ENCODE measurements at regions of chr10 and their contacts with region 1.

Region 1: GRCh38 chr10:63629363-63630084 is 108.3 kb downstream of the REEP3 start:
- DNase-seq: peak; percentile 89
- ATAC-seq: peak; percentile 56
- H3K4me3 ChIP-seq: peak overlapping the region; percentile 65 to 88 (median 81)
- H3K4me3 Mint-ChIP-seq: peak overlapping the region; percentile 97
- H3K27ac ChIP-seq: peak overlapping the region; percentile 61 to 66
- H3K27ac Mint-ChIP-seq: peak overlapping the region; percentile 96
- H3K4me1 ChIP-seq: peaks cover 17 to 28% of the 10 kb centered on the region in 2 donors
- H3K4me1 Mint-ChIP-seq: peaks cover 24% of the 10 kb centered on the region
- H3K27me3 ChIP-seq: no peaks in the 10 kb centered on the region
- H3K27me3 Mint-ChIP-seq: no peaks in the 10 kb centered on the region
- CTCF ChIP-seq: peak; percentile 90

Region 2: DNA sequence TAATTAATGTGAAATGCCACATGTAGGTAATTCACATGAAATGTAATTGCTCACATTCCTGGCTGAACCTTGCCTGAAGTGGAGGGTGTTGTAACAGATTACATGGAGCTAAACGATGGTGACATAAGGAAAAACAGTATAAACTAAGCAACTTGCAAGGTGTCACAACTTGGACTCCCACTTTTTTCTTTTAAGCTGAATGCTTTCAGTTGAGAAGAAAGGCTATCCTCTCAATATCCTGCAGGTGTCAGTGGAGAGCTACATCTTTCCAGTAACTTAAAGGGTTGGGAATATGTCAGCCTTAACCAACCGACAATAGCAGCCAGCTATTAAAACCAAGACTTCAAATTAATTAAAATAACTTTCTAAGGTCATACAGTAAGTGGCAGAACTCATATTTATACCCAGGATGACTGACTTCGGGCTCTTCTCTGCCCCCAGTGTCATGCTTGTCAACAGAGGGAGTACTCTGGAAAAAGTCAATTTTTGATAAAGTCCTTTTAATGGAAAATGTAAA is 462.7 kb before region 1 on chr10:
- CTCF ChIA-PET with region 1: interaction called, 129 read pairs
- POLR2A ChIA-PET with region 1: interaction called, 4 read pairs
- intact Hi-C with region 1: loop called (anchors 1 kb)
- DNase-seq: peak; percentile 74
- ATAC-seq: peak; percentile 84
- H3K4me3 ChIP-seq: no peak overlapping the region
- H3K4me3 Mint-ChIP-seq: no peak overlapping the region
- H3K27ac ChIP-seq: no peak overlapping the region
- H3K27ac Mint-ChIP-seq: no peak overlapping the region
- H3K4me1 ChIP-seq: no peaks in the 10 kb centered on the region
- H3K4me1 Mint-ChIP-seq: peaks cover 2% of the 10 kb centered on the region
- H3K27me3 ChIP-seq: no peaks in the 10 kb centered on the region
- H3K27me3 Mint-ChIP-seq: no peaks in the 10 kb centered on the region
- CTCF ChIP-seq: peak; percentile 83

Region 3: DNA sequence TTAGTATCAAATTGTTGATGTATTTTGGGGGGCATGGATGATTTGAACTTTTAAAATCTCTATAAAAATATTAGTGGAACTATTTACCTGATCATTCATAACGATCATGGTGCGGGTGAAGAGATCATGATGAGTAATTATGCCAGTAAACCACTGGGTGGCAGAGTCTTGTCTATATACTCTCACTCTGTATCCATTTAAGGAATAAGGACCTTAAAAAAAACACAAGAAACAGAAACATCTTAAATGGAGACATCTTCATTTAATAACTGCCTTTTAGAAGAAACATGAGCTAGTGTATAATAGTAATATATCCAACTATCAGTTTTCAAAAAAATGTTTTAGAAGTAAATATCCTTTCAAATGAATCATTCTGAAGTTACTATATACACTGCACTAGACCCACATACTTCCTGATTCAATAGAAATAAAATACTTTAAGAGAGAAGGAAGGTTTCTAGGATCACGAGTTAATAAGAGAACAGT is 412.4 kb before region 1 on chr10:
- CTCF ChIA-PET with region 1: interaction called, 83 read pairs
- POLR2A ChIA-PET with region 1: interaction called, 7 read pairs
- intact Hi-C with region 1: loop called (anchors 1 kb)
- DNase-seq: peak; percentile 73
- ATAC-seq: peak; percentile 88
- H3K4me3 ChIP-seq: no peak overlapping the region
- H3K4me3 Mint-ChIP-seq: no peak overlapping the region
- H3K27ac ChIP-seq: peak overlapping the region in 1 of 2 donors; percentile 25
- H3K27ac Mint-ChIP-seq: peak overlapping the region; percentile 43
- H3K4me1 ChIP-seq: peaks cover 29 to 39% of the 10 kb centered on the region in 2 donors
- H3K4me1 Mint-ChIP-seq: peaks cover 54% of the 10 kb centered on the region
- H3K27me3 ChIP-seq: no peaks in the 10 kb centered on the region
- H3K27me3 Mint-ChIP-seq: no peaks in the 10 kb centered on the region
- CTCF ChIP-seq: peak; percentile 83

Region 4: GRCh38 chr10:63465293-63466143 is 164.0 kb before region 1 on chr10 and contains the start of gene JMJD1C:
- CTCF ChIA-PET with region 1: interaction called, 6 read pairs
- POLR2A ChIA-PET with region 1: no interaction called
- intact Hi-C with region 1: loop called (anchors 1 kb)
- DNase-seq: peak; percentile 84
- ATAC-seq: peak; percentile 72
- H3K4me3 ChIP-seq: peak within 1 kb of the TSS; percentile 66 to 97 (median 92)
- H3K4me3 Mint-ChIP-seq: peak within 1 kb of the TSS; percentile 98
- H3K27ac ChIP-seq: peak within 1 kb of the TSS; percentile 60 to 75
- H3K27ac Mint-ChIP-seq: peak within 1 kb of the TSS; percentile 95
- H3K4me1 ChIP-seq: peaks cover 13% of the 10 kb centered on the region in 2 donors
- H3K4me1 Mint-ChIP-seq: peaks cover 18% of the 10 kb centered on the region
- H3K27me3 ChIP-seq: no peaks in the 10 kb centered on the region
- H3K27me3 Mint-ChIP-seq: no peaks in the 10 kb centered on the region
- CTCF ChIP-seq: no peak
- total RNA-seq, gene JMJD1C: 235 and 247 TPM in 2 replicates

Region 5: GRCh38 chr10:63700209-63700613 is 70.7 kb after region 1 on chr10:
- CTCF ChIA-PET with region 1: interaction called, 4 read pairs
- POLR2A ChIA-PET with region 1: no interaction called
- intact Hi-C with region 1: loop called (anchors 10 kb)
- DNase-seq: no peak
- ATAC-seq: no peak
- H3K4me3 ChIP-seq: no peak overlapping the region
- H3K4me3 Mint-ChIP-seq: no peak overlapping the region
- H3K27ac ChIP-seq: peak overlapping the region in 1 of 2 donors; percentile 13
- H3K27ac Mint-ChIP-seq: peak overlapping the region; percentile 13
- H3K4me1 ChIP-seq: peaks cover 30 to 31% of the 10 kb centered on the region in 2 donors
- H3K4me1 Mint-ChIP-seq: peaks cover 41% of the 10 kb centered on the region
- H3K27me3 ChIP-seq: no peaks in the 10 kb centered on the region
- H3K27me3 Mint-ChIP-seq: no peaks in the 10 kb centered on the region
- CTCF ChIP-seq: no peak

Measured in B cell (primary cell).